AG04449 (cell line): ENCODE measurements at regions of chr1 and their contacts with region 1.

Region 1: DNA sequence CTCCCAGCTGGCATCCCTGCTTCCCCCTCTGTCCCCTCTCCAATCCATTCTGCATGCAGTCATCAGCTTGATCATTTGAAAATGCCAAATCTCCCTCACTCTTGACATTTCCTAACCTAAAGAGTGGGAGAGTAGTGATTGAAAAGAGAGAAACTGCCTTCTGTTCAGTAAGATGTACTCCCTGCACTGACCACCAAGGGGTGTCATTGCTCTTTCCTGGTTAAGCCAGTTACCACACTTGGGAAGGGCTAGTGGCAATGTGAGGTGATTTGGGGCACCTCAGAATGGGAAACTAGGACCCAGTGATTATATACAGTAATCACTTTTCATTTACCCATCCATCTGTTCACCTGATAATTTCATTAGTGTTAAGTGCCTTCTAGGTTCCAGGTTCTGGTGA is 6.9 kb upstream of the TMEM269 start:
- DNase-seq: no peak
- H3K4me3 ChIP-seq: no peak overlapping the region
- CTCF ChIP-seq: peak; percentile 68

Region 2: GRCh38 chr1:42766741-42767509 is 10.9 kb before region 1 on chr1 and contains the starts of genes C1orf50 and P3H1:
- CTCF ChIA-PET with region 1: interaction called, 59 read pairs
- POLR2A ChIA-PET with region 1: interaction called, 4 read pairs
- DNase-seq: peak; percentile 89
- H3K4me3 ChIP-seq: peak within 1 kb of the TSS; percentile 100
- CTCF ChIP-seq: no peak

Region 3: GRCh38 chr1:42822800-42823392 is 45.0 kb after region 1 on chr1:
- CTCF ChIA-PET with region 1: interaction called, 10 read pairs
- POLR2A ChIA-PET with region 1: interaction called, 4 read pairs
- DNase-seq: no peak
- H3K4me3 ChIP-seq: no peak overlapping the region
- CTCF ChIP-seq: no peak

Region 4: GRCh38 chr1:42846257-42847110 is 68.6 kb after region 1 on chr1 and contains the start of gene ZNF691:
- CTCF ChIA-PET with region 1: interaction called, 12 read pairs
- POLR2A ChIA-PET with region 1: no interaction called
- DNase-seq: peak; percentile 84
- H3K4me3 ChIP-seq: peak within 1 kb of the TSS; percentile 93
- CTCF ChIP-seq: peak; percentile 74

Region 5: GRCh38 chr1:42913426-42914091 is 135.7 kb after region 1 on chr1:
- CTCF ChIA-PET with region 1: interaction called, 39 read pairs
- POLR2A ChIA-PET with region 1: no interaction called
- DNase-seq: peak; percentile 37
- H3K4me3 ChIP-seq: no peak overlapping the region
- CTCF ChIP-seq: peak; percentile 81

Region 6: DNA sequence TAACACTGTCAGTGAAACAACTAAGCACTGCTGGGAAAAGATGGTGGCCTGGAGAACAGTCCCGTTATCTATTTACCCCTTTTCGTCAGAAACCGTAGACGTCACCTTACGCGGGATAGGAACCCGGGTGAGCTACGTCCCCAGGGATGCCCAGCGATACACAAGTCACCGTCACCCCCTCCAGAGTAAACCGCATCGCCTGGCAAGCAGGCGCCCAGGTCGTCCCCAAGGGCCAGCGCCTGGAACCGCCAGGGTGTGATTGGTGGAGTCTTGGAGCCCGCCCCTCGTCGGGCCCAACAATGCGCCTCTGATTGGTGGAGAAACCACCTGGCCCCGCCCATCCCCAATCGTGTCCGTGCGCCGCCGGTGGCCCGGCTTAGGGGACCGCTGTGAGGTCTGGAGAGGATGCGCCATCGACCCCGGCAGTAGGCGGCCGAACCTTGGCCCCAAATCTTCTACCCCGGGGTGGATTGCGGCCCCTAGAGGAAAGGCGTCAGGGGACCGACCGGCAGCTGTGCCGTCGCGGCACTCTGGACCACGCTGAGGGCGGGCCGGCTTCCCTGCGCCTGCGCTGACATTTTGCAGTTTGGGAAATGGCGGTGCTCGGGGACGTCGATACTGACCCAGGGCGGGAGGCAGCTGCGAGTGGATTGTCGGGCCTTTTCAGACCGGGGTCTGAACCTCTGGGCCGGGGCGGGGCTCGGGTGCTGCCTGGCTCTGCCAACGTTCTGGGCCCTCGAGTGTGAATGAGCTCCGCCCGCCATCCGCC is 146.4 kb after region 1 on chr1:
- CTCF ChIA-PET with region 1: interaction called, 27 read pairs
- POLR2A ChIA-PET with region 1: no interaction called
- DNase-seq: peak; percentile 24
- H3K4me3 ChIP-seq: peak overlapping the region; percentile 66
- CTCF ChIP-seq: peak; percentile 7